K562 (cell line): ENCODE measurements at regions of chr9 and their contacts with region 1.

Region 1: GRCh38 chr9:6055213-6055612 is 39.8 kb upstream of the RANBP6 start:
- DNase-seq: peak; percentile 34 to 77 (median 40)
- ATAC-seq: peak; percentile 87
- H3K4me3 ChIP-seq: no peak overlapping the region
- H3K27ac ChIP-seq: no peak overlapping the region
- H3K4me1 ChIP-seq: no peaks in the 10 kb centered on the region
- H3K27me3 ChIP-seq: no peaks in the 10 kb centered on the region
- CTCF ChIP-seq: peak; percentile 49 to 69 (median 51); a peak in 4 of 6 replicates
- EP300 ChIP-seq: no peak
- POLR2A ChIP-seq: no peak
- RAD21 ChIP-seq: peak; percentile 87 to 88

Region 2: GRCh38 chr9:5799314-5799713 is 255.9 kb before region 1 on chr9:
- CTCF ChIA-PET with region 1: no interaction called
- POLR2A ChIA-PET with region 1: no interaction called
- in situ Hi-C with region 1: no loop called
- intact Hi-C with region 1: loop called (anchors 5 kb)
- DNase-seq: peak in 2 of 4 experiments; percentile 11 to 43
- ATAC-seq: peak; percentile 76
- H3K4me3 ChIP-seq: no peak overlapping the region
- H3K27ac ChIP-seq: no peak overlapping the region
- H3K4me1 ChIP-seq: no peaks in the 10 kb centered on the region
- H3K27me3 ChIP-seq: no peaks in the 10 kb centered on the region
- CTCF ChIP-seq: peak; percentile 51 to 86 (median 66)
- EP300 ChIP-seq: no peak
- POLR2A ChIP-seq: no peak
- RAD21 ChIP-seq: peak; percentile 70 to 85

Region 3: DNA sequence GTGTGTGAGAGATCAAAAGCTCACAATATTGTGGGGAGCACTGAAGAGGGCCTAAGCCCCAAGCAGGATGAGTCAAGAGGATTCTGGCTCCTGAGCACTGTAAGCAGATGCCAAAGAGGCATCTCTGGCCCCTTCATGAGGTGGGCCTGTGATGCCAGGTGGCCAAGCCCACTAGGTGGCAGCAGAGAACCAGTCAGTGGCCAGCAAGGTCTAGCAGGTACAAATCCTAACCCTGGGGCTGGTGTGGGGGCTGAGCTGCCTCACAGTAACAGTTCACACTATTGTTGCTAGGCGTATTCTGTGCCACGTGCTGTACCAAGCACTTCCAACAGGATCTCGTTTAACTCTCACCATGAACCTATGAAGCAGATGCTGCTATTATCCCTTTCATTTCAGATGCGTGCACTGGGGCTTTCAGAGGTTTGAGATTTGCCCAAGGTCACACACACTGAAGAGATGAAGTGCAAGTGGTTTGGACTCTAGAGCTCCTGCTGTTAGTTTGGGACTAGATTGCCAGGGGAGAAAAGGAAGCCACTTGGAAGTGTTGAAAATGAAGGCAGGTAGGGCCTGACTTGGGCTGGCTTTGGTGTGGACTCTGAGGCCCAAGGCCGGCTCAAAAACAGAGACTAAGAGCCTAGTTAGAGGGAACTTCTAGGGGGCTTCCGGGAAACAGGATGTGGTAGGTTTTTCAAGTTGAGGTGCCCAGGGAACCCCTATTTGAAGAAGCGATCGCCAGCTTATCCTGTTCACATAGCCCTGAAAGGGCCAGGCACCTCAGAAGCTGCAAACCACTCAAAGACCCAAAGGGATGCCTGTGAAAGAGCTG is 168.9 kb before region 1 on chr9:
- CTCF ChIA-PET with region 1: interaction called, 4 read pairs
- POLR2A ChIA-PET with region 1: no interaction called
- in situ Hi-C with region 1: no loop called
- intact Hi-C with region 1: loop called (anchors 1 kb)
- DNase-seq: peak; percentile 67 to 80 (median 75)
- ATAC-seq: peak; percentile 99
- H3K4me3 ChIP-seq: no peak overlapping the region
- H3K27ac ChIP-seq: no peak overlapping the region
- H3K4me1 ChIP-seq: 0 out of 5 replicates have a peak, but pooled peaks cover 0 to 3% of the 10 kb centered on the region in 2 experiments
- H3K27me3 ChIP-seq: no peaks in the 10 kb centered on the region
- CTCF ChIP-seq: peak; percentile 79 to 88 (median 85)
- EP300 ChIP-seq: no peak
- POLR2A ChIP-seq: no peak
- RAD21 ChIP-seq: peak; percentile 75 to 92

Region 4: GRCh38 chr9:6078382-6079105 is 23.3 kb after region 1 on chr9:
- CTCF ChIA-PET with region 1: interaction called, 3 read pairs
- POLR2A ChIA-PET with region 1: no interaction called
- in situ Hi-C with region 1: no loop called
- intact Hi-C with region 1: loop called (anchors 1 kb)
- DNase-seq: peak in 1 of 4 experiments; percentile 27
- ATAC-seq: no peak
- H3K4me3 ChIP-seq: no peak overlapping the region
- H3K27ac ChIP-seq: no peak overlapping the region
- H3K4me1 ChIP-seq: peaks cover 9 to 11% of the 10 kb centered on the region in 2 experiments; a peak in 3 of 5 replicates
- H3K27me3 ChIP-seq: no peaks in the 10 kb centered on the region
- CTCF ChIP-seq: no peak
- EP300 ChIP-seq: no peak
- POLR2A ChIP-seq: no peak
- RAD21 ChIP-seq: no peak

Region 5: DNA sequence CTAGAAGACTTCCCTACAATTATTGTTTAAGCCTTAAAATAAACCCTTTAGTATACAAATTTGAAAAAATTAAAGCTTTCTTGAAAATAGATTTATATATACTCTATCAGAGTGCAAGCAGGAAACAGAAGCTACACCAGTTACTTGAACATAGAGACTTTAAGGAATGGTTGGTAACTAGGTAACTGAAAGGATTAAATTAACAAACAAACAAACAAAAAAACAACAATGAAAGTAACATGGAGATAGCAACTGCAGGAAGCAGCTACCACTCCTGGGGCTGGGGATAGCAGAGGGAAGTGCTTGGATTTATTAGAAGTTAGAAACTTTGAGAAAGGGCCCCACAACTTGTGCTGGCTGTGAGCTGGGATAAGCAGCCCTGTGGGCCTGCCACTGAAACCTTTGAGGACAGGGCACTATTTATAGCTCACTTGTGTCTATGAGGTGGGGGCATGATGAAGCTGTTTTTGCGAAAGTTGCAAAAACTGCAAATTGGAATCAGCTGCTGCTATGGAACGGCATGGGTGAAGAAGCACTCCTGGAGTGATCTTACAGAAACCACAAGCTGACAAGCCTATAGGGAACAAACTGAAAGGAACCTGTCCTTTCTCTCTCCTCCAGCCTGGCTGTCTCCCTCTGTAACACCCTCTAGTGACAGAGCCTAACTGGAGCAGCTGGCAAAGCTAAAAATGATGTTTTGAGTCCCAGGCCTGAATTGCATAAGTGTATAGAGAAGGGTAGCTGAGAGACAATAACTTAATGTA is 51.5 kb after region 1 on chr9:
- CTCF ChIA-PET with region 1: interaction called, 3 read pairs
- POLR2A ChIA-PET with region 1: no interaction called
- in situ Hi-C with region 1: no loop called
- intact Hi-C with region 1: loop called (anchors 1 kb)
- DNase-seq: peak in 3 of 4 experiments; percentile 7 to 57 (median 57)
- ATAC-seq: peak; percentile 89
- H3K4me3 ChIP-seq: no peak overlapping the region
- H3K27ac ChIP-seq: peak overlapping the region; percentile 39; the same call in 1 of the 3 replicates
- H3K4me1 ChIP-seq: 0 out of 5 replicates have a peak, but pooled peaks cover 0 to 2% of the 10 kb centered on the region in 2 experiments
- H3K27me3 ChIP-seq: no peaks in the 10 kb centered on the region
- CTCF ChIP-seq: peak; percentile 36 to 48 (median 48); a peak in 4 of 6 replicates
- EP300 ChIP-seq: no peak
- POLR2A ChIP-seq: no peak
- RAD21 ChIP-seq: no peak; a peak in 1 of 4 replicates

Region 6: DNA sequence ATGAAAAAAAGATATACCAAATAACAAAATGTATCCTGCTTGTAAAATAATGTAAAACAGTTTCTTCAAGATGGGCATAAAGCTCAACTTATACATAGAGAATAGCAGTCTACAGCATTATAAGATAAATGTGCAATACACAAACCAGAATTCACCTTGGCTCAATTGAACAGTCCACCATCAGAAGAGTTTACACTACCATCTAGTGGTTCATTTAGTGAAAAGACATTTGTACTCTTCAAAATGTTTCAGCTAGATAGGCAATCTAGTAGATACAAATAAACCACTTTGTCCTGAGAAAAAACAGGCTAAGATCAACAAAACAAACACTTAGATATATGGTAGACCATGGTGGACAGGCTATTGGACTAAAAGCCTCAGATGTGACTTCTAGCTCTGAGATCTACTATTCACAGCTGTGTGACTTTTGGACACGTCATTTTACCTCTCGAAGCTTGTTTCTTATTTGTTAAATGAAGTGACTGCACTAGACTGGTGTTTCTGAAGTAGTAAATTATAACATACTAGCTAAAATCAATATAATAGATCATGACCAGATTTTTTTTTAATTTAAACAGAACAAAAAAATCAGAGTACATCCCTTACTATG is 250.8 kb after region 1 on chr9:
- CTCF ChIA-PET with region 1: interaction called, 12 read pairs
- POLR2A ChIA-PET with region 1: no interaction called
- in situ Hi-C with region 1: loop called (anchors 25 kb)
- intact Hi-C with region 1: loop called (anchors 1 kb)
- DNase-seq: peak in 2 of 4 experiments; percentile 17 to 20
- ATAC-seq: peak; percentile 58; the same call in 2 of the 3 replicates
- H3K4me3 ChIP-seq: no peak overlapping the region
- H3K27ac ChIP-seq: no peak overlapping the region
- H3K4me1 ChIP-seq: no peaks in the 10 kb centered on the region
- H3K27me3 ChIP-seq: no peaks in the 10 kb centered on the region
- CTCF ChIP-seq: peak in 2 of 3 experiments; percentile 14 to 54; a peak in 3 of 6 replicates
- EP300 ChIP-seq: no peak
- POLR2A ChIP-seq: no peak
- RAD21 ChIP-seq: peak; percentile 62 to 82

Region 7: GRCh38 chr9:6566409-6567139 is 511.4 kb after region 1 on chr9:
- CTCF ChIA-PET with region 1: no interaction called
- POLR2A ChIA-PET with region 1: no interaction called
- in situ Hi-C with region 1: loop called (anchors 25 kb)
- intact Hi-C with region 1: no loop called
- DNase-seq: peak in 1 of 4 experiments; percentile 11
- ATAC-seq: peak; percentile 61
- H3K4me3 ChIP-seq: no peak overlapping the region
- H3K27ac ChIP-seq: no peak overlapping the region
- H3K4me1 ChIP-seq: no peaks in the 10 kb centered on the region; a peak in 1 of 5 replicates
- H3K27me3 ChIP-seq: no peaks in the 10 kb centered on the region; a peak in 1 of 5 replicates
- CTCF ChIP-seq: no peak
- EP300 ChIP-seq: no peak
- POLR2A ChIP-seq: no peak
- RAD21 ChIP-seq: no peak; a peak in 1 of 4 replicates

Region 8: DNA sequence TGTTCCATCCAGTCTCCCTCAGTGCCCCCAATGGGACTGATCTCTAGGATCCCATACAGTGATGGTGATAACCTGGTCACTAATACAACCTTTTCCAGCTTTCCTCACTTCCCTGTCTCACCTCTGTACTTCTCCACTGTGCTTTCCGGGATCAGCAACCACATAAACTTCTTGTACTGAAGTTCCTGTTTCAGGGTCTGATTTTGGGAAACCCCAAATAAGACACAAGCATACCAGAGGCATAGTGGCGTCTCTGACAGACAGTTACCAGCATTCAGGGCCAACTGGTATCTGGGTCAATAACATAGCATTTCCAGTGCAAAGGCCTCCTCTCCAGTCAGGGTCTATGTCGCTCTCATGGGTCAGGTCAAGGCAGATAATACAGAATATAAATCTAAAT is 526.0 kb after region 1 on chr9:
- CTCF ChIA-PET with region 1: no interaction called
- POLR2A ChIA-PET with region 1: no interaction called
- in situ Hi-C with region 1: no loop called
- intact Hi-C with region 1: no loop called
- DNase-seq: no peak
- ATAC-seq: no peak
- H3K4me3 ChIP-seq: no peak overlapping the region
- H3K27ac ChIP-seq: no peak overlapping the region
- H3K4me1 ChIP-seq: no peaks in the 10 kb centered on the region; a peak in 1 of 5 replicates
- H3K27me3 ChIP-seq: peaks cover 8 to 17% of the 10 kb centered on the region in 2 experiments; a peak in 4 of 5 replicates
- CTCF ChIP-seq: no peak
- EP300 ChIP-seq: no peak
- POLR2A ChIP-seq: no peak
- RAD21 ChIP-seq: no peak